ENCODE measurements at regions of chr11 and their contacts with region 1.

Region 1: GRCh38 chr11:60242740-60243239 is at the start of gene MS4A4E:
- DNase-seq: peak in 2 of 3 donors; percentile 64 to 71
- H3K4me3 ChIP-seq: peak within 1 kb of the TSS; percentile 34 to 66 (median 63)
- H3K4me3 Mint-ChIP-seq: peak within 1 kb of the TSS; percentile 78 to 96
- H3K27ac ChIP-seq: peak within 1 kb of the TSS; percentile 65 to 77
- H3K27ac Mint-ChIP-seq: peak within 1 kb of the TSS; percentile 88 to 94 (median 91)
- H3K4me1 ChIP-seq: peaks cover 46 to 53% of the 10 kb centered on the region in 2 donors
- H3K4me1 Mint-ChIP-seq: peaks cover 52% of the 10 kb centered on the region
- H3K27me3 ChIP-seq: no peaks in the 10 kb centered on the region
- H3K27me3 Mint-ChIP-seq: no peaks in the 10 kb centered on the region
- CTCF ChIP-seq: no peak
- polyA plus RNA-seq, gene MS4A4E: 1.00 to 10.2 (median 1.1) TPM

Region 2: GRCh38 chr11:60098508-60098907 is 144.3 kb before region 1 on chr11:
- intact Hi-C with region 1: no loop called
- DNase-seq: no peak
- H3K4me3 ChIP-seq: no peak overlapping the region
- H3K4me3 Mint-ChIP-seq: no peak overlapping the region
- H3K27ac ChIP-seq: no peak overlapping the region
- H3K27ac Mint-ChIP-seq: no peak overlapping the region
- H3K4me1 ChIP-seq: peaks cover 3% of the 10 kb centered on the region in 2 donors
- H3K4me1 Mint-ChIP-seq: peaks cover 15% of the 10 kb centered on the region
- H3K27me3 ChIP-seq: no peaks in the 10 kb centered on the region
- H3K27me3 Mint-ChIP-seq: no peaks in the 10 kb centered on the region
- CTCF ChIP-seq: no peak

Region 3: DNA sequence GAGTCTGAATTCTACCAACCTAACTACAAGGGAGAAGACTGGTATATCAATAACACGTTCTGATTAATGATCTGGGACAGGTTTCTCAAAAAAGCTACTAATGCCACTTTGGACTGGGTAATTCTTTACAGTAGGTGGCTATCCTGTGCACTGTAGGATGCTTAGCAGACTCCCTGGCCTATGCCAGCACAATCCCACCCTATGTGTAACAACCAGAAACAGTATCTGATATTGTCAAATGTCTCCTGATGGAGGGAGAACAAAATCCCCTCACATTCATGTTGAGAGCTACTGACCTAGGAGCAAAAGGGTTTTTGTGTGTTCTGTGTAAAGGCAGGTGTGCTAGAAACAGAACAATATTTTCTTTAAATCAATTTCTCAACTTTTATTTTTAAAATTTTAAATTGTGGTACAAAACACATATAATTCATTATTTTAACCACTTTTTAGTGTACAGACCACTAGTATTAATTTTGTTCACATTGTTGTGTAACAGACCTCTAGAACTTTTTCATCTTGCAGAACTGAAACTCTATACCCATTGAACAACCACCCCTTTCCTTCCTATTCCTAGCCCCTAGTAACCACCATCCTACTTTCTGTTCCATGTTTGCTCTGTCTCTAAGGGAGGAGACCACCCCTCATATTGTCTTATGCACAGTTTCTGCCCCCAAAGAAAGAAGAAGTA is 57.8 kb before region 1 on chr11:
- intact Hi-C with region 1: loop called (anchors 5 to 10 kb)
- DNase-seq: peak; percentile 68 to 81 (median 72)
- H3K4me3 ChIP-seq: peak overlapping the region in 1 of 3 experiments; percentile 92
- H3K4me3 Mint-ChIP-seq: peak overlapping the region in 1 of 2 donors; percentile 51
- H3K27ac ChIP-seq: peak overlapping the region; percentile 90 to 92
- H3K27ac Mint-ChIP-seq: peak overlapping the region; percentile 91 to 98 (median 96)
- H3K4me1 ChIP-seq: peaks cover 57 to 75% of the 10 kb centered on the region in 2 donors
- H3K4me1 Mint-ChIP-seq: peaks cover 81% of the 10 kb centered on the region
- H3K27me3 ChIP-seq: no peaks in the 10 kb centered on the region
- H3K27me3 Mint-ChIP-seq: peaks cover 0 to 4% (median 0%) of the 10 kb centered on the region in 3 donors
- CTCF ChIP-seq: no peak

Measured in CD14-positive monocyte (primary cell).